ENCODE measurements at regions of chr1 and their contacts with region 1.

Region 1: DNA sequence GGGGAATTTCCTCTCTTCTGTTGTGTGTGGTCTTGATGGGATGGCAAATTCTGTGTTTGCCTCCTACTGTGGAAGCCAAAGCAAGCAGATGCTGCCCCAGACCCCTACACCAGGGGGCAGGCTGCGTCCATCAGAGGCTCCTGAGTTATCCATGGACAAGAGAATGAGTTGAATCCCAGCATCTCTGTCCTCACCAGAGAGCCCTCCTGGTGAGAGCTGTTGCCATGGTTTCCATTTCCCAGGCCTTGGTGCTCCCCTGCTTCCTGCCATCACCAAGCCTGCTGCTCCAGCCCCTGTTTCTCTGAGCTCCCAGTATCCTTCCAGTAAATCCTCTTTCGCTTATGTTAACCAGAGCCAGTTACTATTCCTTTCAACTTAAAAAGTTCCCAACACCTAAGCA is 20.4 kb upstream of the GNG12 start:
- DNase-seq: no peak
- ATAC-seq: peak; percentile 82
- H3K4me3 ChIP-seq: no peak overlapping the region
- H3K27ac ChIP-seq: no peak overlapping the region
- H3K4me1 ChIP-seq: no peaks in the 10 kb centered on the region
- H3K27me3 ChIP-seq: no peaks in the 10 kb centered on the region
- CTCF ChIP-seq: peak; percentile 51 to 72 (median 52)
- EP300 ChIP-seq: no peak
- POLR2A ChIP-seq: no peak
- RAD21 ChIP-seq: peak; percentile 41

Region 2: DNA sequence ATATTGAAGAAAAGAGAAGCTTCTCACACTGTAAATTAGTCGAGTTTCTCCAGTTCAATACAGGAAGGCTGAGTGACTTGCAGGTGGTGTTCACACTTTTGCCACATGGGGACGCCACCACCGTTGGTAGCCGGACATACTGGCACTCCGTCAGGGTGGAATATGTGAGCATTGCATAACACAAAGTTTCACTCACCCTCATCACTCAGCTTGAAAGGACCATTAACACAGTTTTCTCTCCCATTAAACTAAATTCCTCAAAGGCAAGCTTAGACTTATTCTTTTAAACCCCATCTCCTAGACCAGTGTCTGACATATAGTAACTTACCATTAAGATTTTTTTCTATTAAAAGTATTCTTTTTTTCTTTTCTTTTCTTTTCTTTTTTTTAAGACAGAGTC is 318.2 kb before region 1 on chr1:
- CTCF ChIA-PET with region 1: interaction called, 7 read pairs
- POLR2A ChIA-PET with region 1: interaction called, 3 read pairs
- RAD21 ChIA-PET with region 1: interaction called, 7 read pairs
- SMC1A ChIA-PET with region 1: interaction called, 4 read pairs
- in situ Hi-C with region 1: no loop called
- intact Hi-C with region 1: loop called (anchors 10 kb)
- DNase-seq: peak; percentile 9
- ATAC-seq: peak; percentile 90
- H3K4me3 ChIP-seq: no peak overlapping the region
- H3K27ac ChIP-seq: no peak overlapping the region
- H3K4me1 ChIP-seq: no peaks in the 10 kb centered on the region
- H3K27me3 ChIP-seq: no peaks in the 10 kb centered on the region
- CTCF ChIP-seq: peak; percentile 66 to 77 (median 75)
- EP300 ChIP-seq: no peak
- POLR2A ChIP-seq: no peak
- RAD21 ChIP-seq: peak; percentile 65

Region 3: GRCh38 chr1:67814121-67814772 is 39.5 kb before region 1 on chr1:
- CTCF ChIA-PET with region 1: interaction called, 12 read pairs
- POLR2A ChIA-PET with region 1: no interaction called
- RAD21 ChIA-PET with region 1: interaction called, 13 read pairs
- SMC1A ChIA-PET with region 1: interaction called, 13 read pairs
- in situ Hi-C with region 1: no loop called
- intact Hi-C with region 1: no loop called
- DNase-seq: no peak
- ATAC-seq: no peak
- H3K4me3 ChIP-seq: no peak overlapping the region
- H3K27ac ChIP-seq: no peak overlapping the region
- H3K4me1 ChIP-seq: no peaks in the 10 kb centered on the region
- H3K27me3 ChIP-seq: no peaks in the 10 kb centered on the region
- CTCF ChIP-seq: no peak
- EP300 ChIP-seq: no peak
- POLR2A ChIP-seq: no peak
- RAD21 ChIP-seq: no peak

Region 4: GRCh38 chr1:67832737-67833601 is 20.7 kb before region 1 on chr1 and contains the start of gene GNG12:
- CTCF ChIA-PET with region 1: interaction called, 87 read pairs
- POLR2A ChIA-PET with region 1: interaction called, 5 read pairs
- RAD21 ChIA-PET with region 1: interaction called, 19 read pairs
- SMC1A ChIA-PET with region 1: interaction called, 45 read pairs
- in situ Hi-C with region 1: no loop called
- intact Hi-C with region 1: no loop called
- DNase-seq: no peak
- ATAC-seq: peak; percentile 78
- H3K4me3 ChIP-seq: no peak within 1 kb of the TSS
- H3K27ac ChIP-seq: no peak within 1 kb of the TSS
- H3K4me1 ChIP-seq: no peaks in the 10 kb centered on the region
- H3K27me3 ChIP-seq: peaks cover 6 to 11% of the 10 kb centered on the region in 2 experiments; a peak in 3 of 4 replicates
- CTCF ChIP-seq: no peak
- EP300 ChIP-seq: no peak
- POLR2A ChIP-seq: no peak
- RAD21 ChIP-seq: no peak
- polyA plus RNA-seq, gene GNG12: 0.22 to 0.27 TPM

Region 5: DNA sequence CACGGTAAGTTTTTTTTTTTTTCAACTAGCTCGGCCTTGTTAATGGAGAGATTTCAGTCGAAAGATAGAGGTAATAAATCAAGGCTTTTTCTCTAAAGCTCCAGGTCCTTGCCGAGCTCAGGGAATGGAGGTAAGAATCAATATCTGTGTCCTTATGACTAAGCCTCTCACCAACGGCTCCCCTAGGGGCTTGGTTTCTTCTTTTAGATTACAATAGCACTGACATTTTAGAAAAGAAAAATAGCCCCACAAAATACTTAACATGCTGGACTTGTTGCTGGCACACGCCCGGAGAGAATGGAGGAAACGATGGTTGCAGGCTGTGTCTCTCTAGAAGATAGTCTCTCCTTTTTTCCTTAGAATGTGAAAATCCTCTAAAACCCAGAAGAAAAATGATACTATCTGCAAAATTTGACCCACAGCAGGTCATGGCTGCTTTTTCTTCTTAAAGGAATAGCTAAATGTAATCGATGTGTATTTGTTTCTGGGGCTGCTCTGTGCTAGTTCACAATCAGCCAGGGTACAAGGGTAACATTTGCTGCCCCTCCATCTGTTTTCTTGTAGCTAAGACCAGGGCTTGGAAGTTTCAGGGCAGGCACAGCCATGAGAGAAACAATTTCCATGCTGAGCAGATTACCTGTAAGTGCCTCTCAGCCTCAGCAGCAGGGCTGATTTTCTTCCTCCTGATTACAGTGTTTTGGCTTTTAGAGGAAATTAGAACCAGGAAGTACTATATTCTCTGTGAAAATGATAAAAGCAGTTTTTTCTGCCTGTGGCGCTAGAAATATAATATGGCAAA is 65.8 kb after region 1 on chr1:
- CTCF ChIA-PET with region 1: no interaction called
- POLR2A ChIA-PET with region 1: no interaction called
- RAD21 ChIA-PET with region 1: no interaction called
- SMC1A ChIA-PET with region 1: no interaction called
- in situ Hi-C with region 1: no loop called
- intact Hi-C with region 1: loop called (anchors 10 kb)
- DNase-seq: no peak
- ATAC-seq: no peak
- H3K4me3 ChIP-seq: no peak overlapping the region
- H3K27ac ChIP-seq: no peak overlapping the region
- H3K4me1 ChIP-seq: no peaks in the 10 kb centered on the region
- H3K27me3 ChIP-seq: no peaks in the 10 kb centered on the region
- CTCF ChIP-seq: no peak
- EP300 ChIP-seq: no peak
- POLR2A ChIP-seq: no peak
- RAD21 ChIP-seq: no peak

Region 6: GRCh38 chr1:68010090-68010489 is 156.4 kb after region 1 on chr1:
- CTCF ChIA-PET with region 1: interaction called, 27 read pairs
- POLR2A ChIA-PET with region 1: no interaction called
- RAD21 ChIA-PET with region 1: interaction called, 11 read pairs
- SMC1A ChIA-PET with region 1: interaction called, 9 read pairs
- in situ Hi-C with region 1: no loop called
- intact Hi-C with region 1: no loop called
- DNase-seq: no peak
- ATAC-seq: no peak
- H3K4me3 ChIP-seq: no peak overlapping the region
- H3K27ac ChIP-seq: no peak overlapping the region
- H3K4me1 ChIP-seq: no peaks in the 10 kb centered on the region
- H3K27me3 ChIP-seq: no peaks in the 10 kb centered on the region
- CTCF ChIP-seq: peak in 1 of 3 experiments; percentile 6; a peak in 1 of 6 replicates
- EP300 ChIP-seq: no peak
- POLR2A ChIP-seq: no peak
- RAD21 ChIP-seq: no peak

Region 7: DNA sequence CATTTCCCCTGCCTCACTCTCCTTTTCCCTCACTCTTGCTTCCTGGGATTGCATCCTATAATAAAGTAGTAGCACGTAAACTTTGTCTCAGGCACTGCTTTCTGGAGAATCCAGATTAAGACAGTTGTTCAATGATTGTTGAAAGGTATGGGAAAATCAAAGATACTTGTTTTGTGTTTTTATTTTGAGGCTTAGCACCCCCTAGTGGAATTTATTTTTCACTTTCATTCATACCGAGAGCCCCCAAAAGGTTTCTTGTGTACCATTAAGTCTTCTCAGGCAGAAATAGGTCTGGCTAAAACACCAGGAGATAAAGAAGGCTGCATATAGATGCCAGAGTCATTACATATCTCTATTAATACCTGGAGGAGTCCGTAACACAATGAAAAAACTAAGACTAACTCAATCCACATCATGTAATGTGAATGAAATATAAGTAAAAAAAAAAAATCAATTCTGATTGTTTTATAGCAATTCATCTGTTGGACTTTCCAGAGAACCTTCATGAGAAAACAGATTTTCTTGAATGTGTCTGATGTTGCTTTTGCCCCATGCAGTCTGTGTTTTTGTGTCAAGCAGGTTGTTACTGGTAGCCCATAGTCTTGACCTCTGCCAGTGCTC is 492.6 kb after region 1 on chr1:
- CTCF ChIA-PET with region 1: interaction called, 3 read pairs
- POLR2A ChIA-PET with region 1: no interaction called
- RAD21 ChIA-PET with region 1: interaction called, 4 read pairs
- SMC1A ChIA-PET with region 1: interaction called, 6 read pairs
- in situ Hi-C with region 1: no loop called
- intact Hi-C with region 1: loop called (anchors 5 kb)
- DNase-seq: no peak
- ATAC-seq: peak; percentile 56
- H3K4me3 ChIP-seq: no peak overlapping the region
- H3K27ac ChIP-seq: no peak overlapping the region
- H3K4me1 ChIP-seq: no peaks in the 10 kb centered on the region
- H3K27me3 ChIP-seq: no peaks in the 10 kb centered on the region
- CTCF ChIP-seq: peak; percentile 1 to 33 (median 24); a peak in 3 of 6 replicates
- EP300 ChIP-seq: no peak
- POLR2A ChIP-seq: no peak
- RAD21 ChIP-seq: peak; percentile 28; the same call in 1 of the 2 replicates

Measured in GM12878 (cell line).